Lower lobe of right lung (tissue), 2 donors: ENCODE measurements at regions of chr5 and their contacts with region 1.

Region 1: GRCh38 chr5:87267574-87268125 is at the start of gene RASA1:
- DNase-seq: peak; percentile 96
- ATAC-seq: peak; percentile 97
- H3K4me3 ChIP-seq: peak within 1 kb of the TSS; percentile 93
- H3K27ac ChIP-seq: peak within 1 kb of the TSS; percentile 88
- H3K4me1 ChIP-seq: peaks cover 29% of the 10 kb centered on the region
- H3K27me3 ChIP-seq: no peaks in the 10 kb centered on the region
- CTCF ChIP-seq: no peak
- total RNA-seq, gene RASA1: 32.6 TPM

Region 2: GRCh38 chr5:87368601-87369000 is 101.0 kb after region 1 on chr5:
- intact Hi-C with region 1: no loop called
- DNase-seq: no peak
- ATAC-seq: no peak
- H3K4me3 ChIP-seq: no peak overlapping the region
- H3K27ac ChIP-seq: no peak overlapping the region
- H3K4me1 ChIP-seq: no peaks in the 10 kb centered on the region
- H3K27me3 ChIP-seq: no peaks in the 10 kb centered on the region
- CTCF ChIP-seq: no peak

Region 3: DNA sequence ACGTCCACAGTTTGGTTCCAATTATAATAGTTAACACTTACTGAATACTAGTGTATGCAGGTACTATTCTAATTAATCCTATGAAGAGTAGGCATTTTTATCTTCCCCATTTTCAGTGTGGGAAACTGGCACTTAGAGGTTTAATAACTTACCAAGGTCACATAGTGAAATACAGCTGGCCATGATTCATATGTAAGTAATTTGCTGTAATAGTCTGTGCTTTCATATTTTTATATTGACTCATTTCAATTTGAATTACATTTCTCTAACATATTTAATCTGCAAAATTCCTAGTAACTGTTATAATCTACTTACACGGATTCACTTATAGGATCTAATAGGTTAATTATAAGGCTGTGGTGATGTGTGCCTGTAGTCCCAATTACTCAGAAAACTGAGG is 125.7 kb after region 1 on chr5:
- intact Hi-C with region 1: loop called (anchors 10 kb)
- DNase-seq: no peak
- ATAC-seq: no peak
- H3K4me3 ChIP-seq: no peak overlapping the region
- H3K27ac ChIP-seq: no peak overlapping the region
- H3K4me1 ChIP-seq: peaks cover 6% of the 10 kb centered on the region
- H3K27me3 ChIP-seq: no peaks in the 10 kb centered on the region
- CTCF ChIP-seq: no peak